ENCODE measurements at regions of chr9 and their contacts with region 1.

Region 1: GRCh38 chr9:127611899-127612790 is at the start of gene STXBP1:
- DNase-seq: peak; percentile 72 to 75 (median 74)
- H3K4me3 ChIP-seq: peak within 1 kb of the TSS; percentile 56 to 83 (median 79)
- H3K4me3 Mint-ChIP-seq: peak within 1 kb of the TSS; percentile 91 to 94
- H3K27ac ChIP-seq: peak within 1 kb of the TSS in 1 of 2 donors; percentile 56
- H3K27ac Mint-ChIP-seq: peak within 1 kb of the TSS in 6 of 7 donors; percentile 76 to 88 (median 82)
- H3K4me1 ChIP-seq: peaks cover 36 to 43% of the 10 kb centered on the region in 2 donors
- H3K4me1 Mint-ChIP-seq: peaks cover 31% of the 10 kb centered on the region
- H3K27me3 ChIP-seq: peaks cover 17 to 31% of the 10 kb centered on the region in 2 donors
- H3K27me3 Mint-ChIP-seq: peaks cover 40 to 56% (median 51%) of the 10 kb centered on the region in 3 donors
- CTCF ChIP-seq: no peak
- polyA plus RNA-seq, gene STXBP1: 0.27 to 0.59 TPM in 2 of 3 donors, not detected in the other

Region 2: DNA sequence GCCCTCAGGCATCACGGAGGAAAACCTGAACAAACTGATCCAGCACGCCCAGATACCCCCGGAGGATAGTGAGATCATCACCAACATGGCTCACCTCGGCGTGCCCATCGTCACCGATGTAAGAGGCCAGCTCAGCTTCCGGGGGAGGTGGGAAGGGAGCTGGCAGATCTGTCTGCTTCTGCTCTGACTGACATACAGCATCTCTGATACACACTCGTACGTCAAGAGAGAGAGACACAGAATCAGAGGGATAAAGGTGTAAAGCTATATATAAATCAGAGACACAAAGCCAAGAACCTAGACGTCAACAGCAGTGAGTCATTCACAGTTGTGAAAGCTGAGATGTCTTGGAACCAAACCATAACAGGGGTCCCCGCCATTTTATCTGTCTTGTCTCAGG is 64.5 kb after region 1 on chr9:
- intact Hi-C with region 1: no loop called
- DNase-seq: no peak
- H3K4me3 ChIP-seq: no peak overlapping the region
- H3K4me3 Mint-ChIP-seq: no peak overlapping the region
- H3K27ac ChIP-seq: no peak overlapping the region
- H3K27ac Mint-ChIP-seq: no peak overlapping the region
- H3K4me1 ChIP-seq: no peaks in the 10 kb centered on the region
- H3K4me1 Mint-ChIP-seq: no peaks in the 10 kb centered on the region
- H3K27me3 ChIP-seq: no peaks in the 10 kb centered on the region
- H3K27me3 Mint-ChIP-seq: peaks cover 0 to 3% (median 0%) of the 10 kb centered on the region in 3 donors
- CTCF ChIP-seq: no peak

Region 3: DNA sequence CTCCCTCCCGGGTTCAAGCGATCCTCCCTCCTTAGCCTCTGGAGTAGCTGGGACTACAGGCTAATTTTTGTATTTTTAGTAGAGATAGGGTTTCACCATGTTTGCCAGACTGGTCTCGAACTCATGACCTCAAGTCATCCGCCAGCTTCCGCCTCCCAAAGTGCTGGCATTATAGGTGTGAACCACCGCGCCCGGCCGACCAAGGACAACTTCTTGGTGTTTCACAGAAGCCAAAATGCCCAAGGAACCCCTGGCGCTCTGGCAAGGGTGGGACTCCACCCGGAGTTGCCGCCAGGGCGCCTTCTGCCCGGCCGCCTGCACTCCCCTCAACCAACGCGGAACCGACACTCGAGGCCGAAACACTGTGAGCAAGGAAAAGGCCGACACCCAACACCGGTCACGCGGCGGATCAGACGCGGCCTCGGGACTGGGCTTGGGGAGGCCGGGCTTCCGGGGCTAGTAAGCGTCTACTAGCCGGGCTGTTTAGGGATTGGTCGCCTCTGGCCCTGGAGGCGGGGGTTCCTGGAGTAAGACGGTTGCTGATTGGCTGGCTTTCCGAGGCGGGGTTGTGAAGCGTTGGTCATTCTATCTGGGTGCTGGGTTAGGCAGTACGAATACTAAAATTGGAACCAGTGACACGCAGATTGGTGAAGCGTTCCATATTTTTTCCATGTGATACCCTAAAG is 87.0 kb after region 1 on chr9:
- intact Hi-C with region 1: loop called in 1 of 2 experiments (anchors 10 kb)
- DNase-seq: peak; percentile 98 to 99 (median 98)
- H3K4me3 ChIP-seq: peak overlapping the region in 1 of 3 experiments; percentile 27
- H3K4me3 Mint-ChIP-seq: peak overlapping the region; percentile 10 to 60
- H3K27ac ChIP-seq: peak overlapping the region; percentile 71 to 82
- H3K27ac Mint-ChIP-seq: peak overlapping the region; percentile 83 to 93 (median 91)
- H3K4me1 ChIP-seq: peaks cover 7 to 8% of the 10 kb centered on the region in 2 donors
- H3K4me1 Mint-ChIP-seq: peaks cover 16% of the 10 kb centered on the region
- H3K27me3 ChIP-seq: no peaks in the 10 kb centered on the region
- H3K27me3 Mint-ChIP-seq: peaks cover under 1 to 6% (median 3%) of the 10 kb centered on the region in 3 donors
- CTCF ChIP-seq: peak; percentile 52

Region 4: GRCh38 chr9:127723450-127723849 is 111.3 kb after region 1 on chr9:
- intact Hi-C with region 1: loop called in 1 of 2 experiments (anchors 10 kb)
- DNase-seq: no peak
- H3K4me3 ChIP-seq: no peak overlapping the region
- H3K4me3 Mint-ChIP-seq: no peak overlapping the region
- H3K27ac ChIP-seq: no peak overlapping the region
- H3K27ac Mint-ChIP-seq: no peak overlapping the region
- H3K4me1 ChIP-seq: peaks cover 3 to 13% of the 10 kb centered on the region in 2 donors
- H3K4me1 Mint-ChIP-seq: peaks cover 11% of the 10 kb centered on the region
- H3K27me3 ChIP-seq: no peaks in the 10 kb centered on the region
- H3K27me3 Mint-ChIP-seq: peaks cover 5 to 10% (median 5%) of the 10 kb centered on the region in 3 donors
- CTCF ChIP-seq: no peak